Right cardiac atrium (tissue), 5 donors: ENCODE measurements at regions of chr1 and their contacts with region 1.

Region 1: GRCh38 chr1:109979489-109980091 is 5.0 kb upstream of the AHCYL1 start:
- DNase-seq: no peak
- ATAC-seq: no peak
- H3K4me3 ChIP-seq: no peak overlapping the region
- H3K27ac ChIP-seq: peak overlapping the region; percentile 30
- H3K4me1 ChIP-seq: peaks cover 11% of the 10 kb centered on the region
- H3K27me3 ChIP-seq: no peaks in the 10 kb centered on the region

Region 2: GRCh38 chr1:109910123-109910962 is 69.2 kb before region 1 on chr1 and contains the start of gene CSF1:
- intact Hi-C with region 1: loop called in 3 of 4 experiments (anchors 5 kb)
- DNase-seq: peak; percentile 82 to 93 (median 92)
- ATAC-seq: peak; percentile 82 to 84
- H3K4me3 ChIP-seq: peak within 1 kb of the TSS; percentile 86
- H3K27ac ChIP-seq: peak within 1 kb of the TSS; percentile 76
- H3K4me1 ChIP-seq: peaks cover 26% of the 10 kb centered on the region
- H3K27me3 ChIP-seq: no peaks in the 10 kb centered on the region
- total RNA-seq, gene CSF1: 13.9 to 22.6 (median 19.4) TPM

Region 3: DNA sequence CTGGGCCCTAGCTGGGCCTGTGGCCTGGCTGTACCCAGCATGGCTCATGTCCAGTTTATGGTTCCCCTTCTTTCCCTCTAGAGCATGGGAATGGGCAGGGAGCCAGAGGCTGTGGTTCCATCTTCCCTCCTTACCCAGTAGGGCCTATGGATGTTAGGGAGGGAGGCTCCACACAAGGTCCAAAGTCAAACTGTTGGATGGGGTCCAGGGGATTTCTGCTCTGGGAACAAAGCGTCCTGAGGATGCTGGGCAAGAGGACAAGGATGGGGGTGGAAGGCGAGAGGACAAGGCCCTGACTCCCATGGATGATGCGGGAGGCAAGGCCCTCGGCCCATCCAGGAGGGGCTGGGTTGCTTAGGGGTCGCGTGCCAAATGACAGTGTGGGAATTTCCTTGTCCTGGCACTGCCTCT is 51.7 kb before region 1 on chr1:
- intact Hi-C with region 1: loop called in 1 of 4 experiments (anchors 5 kb)
- DNase-seq: peak; percentile 85 to 92 (median 91)
- ATAC-seq: peak; percentile 70 to 79
- H3K4me3 ChIP-seq: no peak overlapping the region
- H3K27ac ChIP-seq: peak overlapping the region; percentile 71
- H3K4me1 ChIP-seq: peaks cover 27% of the 10 kb centered on the region
- H3K27me3 ChIP-seq: no peaks in the 10 kb centered on the region